Posterior vena cava (tissue), 2 donors: ENCODE measurements at regions of chr1 and their contacts with region 1.

Region 1: DNA sequence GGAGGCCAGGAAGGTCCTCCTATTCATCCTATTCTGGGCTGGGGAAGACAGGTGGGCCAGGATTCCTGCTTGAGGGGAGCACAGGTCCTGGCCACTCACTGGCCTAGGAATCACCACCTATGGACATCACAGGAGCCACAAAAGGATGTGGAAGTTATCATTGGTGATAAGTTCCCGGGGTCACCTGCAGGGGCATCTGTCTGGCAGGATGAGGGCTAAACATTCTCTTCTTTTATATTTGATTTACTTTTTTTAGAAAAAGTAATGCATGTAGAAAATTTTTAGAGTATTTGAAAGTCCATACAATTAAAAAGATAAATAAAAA is 33.2 kb upstream of the KIAA0040 start:
- DNase-seq: no peak

Region 2: DNA sequence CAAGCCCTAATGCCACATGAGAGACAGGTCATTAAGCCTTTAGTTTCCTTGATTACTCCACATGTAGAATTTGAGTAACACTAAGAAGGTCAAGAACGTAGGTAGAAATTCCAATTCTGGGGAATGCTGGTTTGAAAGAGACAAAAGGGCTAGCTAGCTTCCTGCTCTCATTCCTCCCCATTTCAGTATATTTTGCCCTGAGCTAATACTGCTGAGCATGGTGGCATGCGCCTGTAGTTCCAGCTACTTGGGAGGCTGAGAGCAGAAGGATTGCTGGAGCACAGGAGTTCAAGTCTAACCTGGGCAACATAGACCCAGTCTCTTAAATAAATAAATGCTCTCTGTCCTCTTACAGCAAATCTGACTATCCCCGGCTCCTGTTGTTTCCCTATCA is 1735.8 kb before region 1 on chr1:
- intact Hi-C with region 1: loop called in 1 of 2 experiments (anchors 5 kb)
- DNase-seq: no peak

Region 3: DNA sequence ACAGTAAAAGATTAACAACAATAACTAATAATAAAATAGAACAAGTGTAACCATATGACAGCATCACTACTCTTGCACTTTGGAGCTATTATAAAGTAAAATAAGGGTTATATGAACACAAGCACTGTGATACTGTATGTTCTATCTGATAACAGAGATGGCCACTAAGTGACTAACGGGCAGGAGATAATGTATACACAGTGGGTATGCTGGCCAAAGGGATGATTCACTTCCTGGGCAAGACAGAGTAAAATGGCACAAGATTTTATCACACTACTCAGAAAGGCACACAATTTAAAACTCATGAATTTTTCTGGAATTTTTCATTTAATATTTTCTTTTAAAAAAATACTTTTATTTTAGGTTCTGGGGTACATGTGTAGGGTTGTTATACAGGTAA is 1635.2 kb before region 1 on chr1:
- intact Hi-C with region 1: loop called in 1 of 2 experiments (anchors 5 kb)
- DNase-seq: no peak